ENCODE measurements at regions of chr6 and their contacts with region 1.

Region 1: DNA sequence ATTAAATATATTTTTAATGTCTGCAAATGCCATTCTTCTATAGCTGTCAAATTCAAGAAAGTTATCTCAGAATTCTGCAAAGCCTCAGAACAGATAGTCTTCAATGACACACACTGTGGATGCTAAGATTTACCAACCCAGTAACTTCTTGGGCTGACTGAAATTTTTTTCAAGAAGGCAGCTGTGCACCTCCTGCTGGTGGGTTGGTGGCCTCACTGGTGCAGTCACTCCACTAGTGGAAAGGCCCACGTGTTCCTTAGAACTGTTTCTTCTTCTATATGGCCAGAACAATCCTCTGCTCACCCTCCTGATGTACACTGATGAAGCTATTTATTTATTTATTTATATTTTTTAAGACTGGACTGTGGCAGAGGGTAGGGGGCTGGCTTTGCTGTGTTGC is 28.1 kb upstream of the MTCL3 start:
- DNase-seq: no peak
- ATAC-seq: no peak
- H3K4me3 ChIP-seq: no peak overlapping the region
- H3K27ac ChIP-seq: no peak overlapping the region
- H3K4me1 ChIP-seq: peaks cover 0 to 5% (median 0%) of the 10 kb centered on the region in 3 donors
- H3K27me3 ChIP-seq: no peaks in the 10 kb centered on the region
- CTCF ChIP-seq: no peak

Region 2: DNA sequence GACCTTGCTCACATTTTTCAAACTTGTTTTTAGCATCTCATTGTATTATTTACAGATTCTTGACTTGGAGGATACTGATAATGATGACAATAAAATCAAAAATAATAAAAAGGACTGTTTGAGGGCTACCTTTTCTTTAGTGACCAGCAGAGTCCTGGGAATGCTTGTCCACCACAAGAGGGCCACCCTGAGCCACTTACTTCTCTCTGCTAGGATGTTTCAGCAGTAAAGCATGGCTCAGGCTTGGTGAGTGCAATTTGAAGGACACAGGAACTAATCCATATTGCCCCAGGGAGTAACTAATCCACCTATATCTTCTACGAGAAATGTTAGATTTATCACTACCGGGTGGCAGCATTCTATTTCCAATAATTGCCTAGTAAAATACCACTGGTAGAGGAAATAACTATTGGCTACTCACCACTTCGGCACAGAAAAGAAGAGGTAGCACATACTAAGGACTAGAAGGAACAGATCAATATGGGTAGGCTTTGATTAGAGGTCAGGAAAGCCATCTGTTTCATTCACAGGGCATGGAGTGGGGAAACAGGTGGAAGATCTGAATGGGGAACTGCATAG is 82.2 kb before region 1 on chr6:
- intact Hi-C with region 1: loop called in 2 of 3 experiments (anchors 10 kb)
- DNase-seq: peak in 5 of 6 donors; percentile 37 to 71 (median 70)
- ATAC-seq: peak; percentile 77 to 98 (median 96)
- H3K4me3 ChIP-seq: no peak overlapping the region
- H3K27ac ChIP-seq: no peak overlapping the region
- H3K4me1 ChIP-seq: no peaks in the 10 kb centered on the region
- H3K27me3 ChIP-seq: no peaks in the 10 kb centered on the region
- CTCF ChIP-seq: peak; percentile 58 to 82 (median 76)

Measured in pancreas (tissue), 10 donors.